ENCODE measurements at regions of chr5 and their contacts with region 1.

Region 1: DNA sequence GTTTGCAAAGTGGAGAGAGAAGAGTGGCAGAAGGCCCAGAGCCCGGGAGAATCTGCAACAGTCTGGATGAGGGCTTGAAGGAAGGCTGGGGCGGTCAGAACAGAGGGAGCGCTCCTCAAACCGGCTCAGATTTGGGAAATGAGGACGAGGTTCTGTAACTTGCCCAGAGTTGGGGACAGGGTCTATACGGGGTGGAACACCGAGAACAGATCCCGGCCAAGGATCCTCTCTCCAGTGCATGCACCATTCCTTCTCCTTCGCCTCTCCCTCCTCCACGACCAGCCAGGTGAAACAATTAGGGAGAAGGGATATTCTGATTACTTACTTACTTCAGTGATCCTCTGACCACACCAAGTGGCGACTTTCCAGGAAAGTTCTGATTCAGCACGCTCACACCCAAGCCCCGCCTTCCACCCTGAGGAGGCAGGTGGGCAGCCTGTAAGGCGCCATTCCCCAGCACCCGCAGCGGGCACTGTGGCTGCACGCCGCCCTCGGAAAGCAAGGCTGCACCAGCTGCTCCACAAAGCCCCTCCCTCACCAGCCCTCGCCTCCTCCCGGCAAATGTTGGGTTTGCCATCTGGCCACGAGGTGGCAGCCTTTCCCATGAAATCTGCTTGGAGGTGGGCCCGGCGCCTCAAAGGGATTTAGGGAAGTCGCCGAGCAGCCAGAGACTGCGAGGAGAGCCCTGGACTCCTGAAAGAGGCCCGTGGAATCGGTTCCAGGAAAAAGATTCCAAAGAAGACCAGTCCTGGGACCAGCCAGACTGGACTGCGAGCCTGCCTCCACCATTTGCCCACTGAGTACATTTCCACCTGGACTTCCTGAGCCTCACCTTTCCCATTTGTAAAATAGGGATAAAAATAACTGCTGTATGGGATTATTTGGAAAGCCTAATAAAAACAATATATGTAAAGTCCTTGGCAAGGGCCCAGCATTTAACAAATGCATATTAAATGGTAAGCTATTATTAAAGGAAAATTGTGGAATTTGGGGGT is 22.2 kb upstream of the WWC1 start:
- DNase-seq: peak; percentile 82
- ATAC-seq: peak; percentile 95
- H3K4me3 ChIP-seq: peak overlapping the region; percentile 38
- H3K27ac ChIP-seq: no peak overlapping the region
- H3K4me1 ChIP-seq: peaks cover 2% of the 10 kb centered on the region; the same call in 1 of the 2 replicates
- H3K27me3 ChIP-seq: no peaks in the 10 kb centered on the region; the same call in 1 of the 2 replicates
- CTCF ChIP-seq: peak; percentile 92
- POLR2A ChIP-seq: 0 out of 2 replicates have a peak, but pooled peaks have one; percentile 45
- RAD21 ChIP-seq: peak; percentile 97

Region 2: DNA sequence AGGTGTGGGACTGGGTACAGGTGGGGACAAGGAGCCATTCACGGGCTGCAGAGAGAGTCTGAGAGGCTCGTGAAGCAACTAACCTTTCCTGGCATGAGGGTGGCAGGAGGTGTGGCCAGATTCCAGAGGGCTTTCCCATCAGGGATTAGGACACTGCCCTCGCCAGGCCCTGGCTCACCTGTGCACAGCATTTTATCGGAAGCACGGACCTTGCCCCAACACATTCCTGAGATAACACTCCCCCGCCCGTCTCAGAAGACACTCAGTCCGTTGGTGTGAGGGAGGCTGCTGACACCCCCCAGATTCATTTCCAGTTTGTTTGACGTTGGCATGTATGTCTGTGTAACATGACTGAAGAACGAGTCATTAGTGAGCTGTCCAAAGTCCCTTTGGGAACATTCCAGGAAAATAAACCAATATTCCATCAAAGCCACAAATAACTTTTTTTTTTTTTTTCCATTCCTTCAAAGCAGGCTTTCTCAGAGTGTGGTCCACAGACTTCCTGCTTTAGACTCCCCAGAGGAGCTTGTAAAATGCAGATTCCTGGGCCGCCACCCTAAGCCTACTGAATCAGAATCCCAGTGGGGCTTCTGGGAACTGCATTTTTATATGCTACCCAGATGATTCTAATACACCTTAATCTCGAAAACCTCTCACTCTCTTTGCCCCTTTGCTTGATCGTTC is 45.6 kb after region 1 on chr5:
- CTCF ChIA-PET with region 1: no interaction called
- POLR2A ChIA-PET with region 1: no interaction called
- dilution Hi-C with region 1: no loop called
- in situ Hi-C with region 1: no loop called
- intact Hi-C with region 1: loop called (anchors 2 kb)
- DNase-seq: peak; percentile 99
- ATAC-seq: peak; percentile 71
- H3K4me3 ChIP-seq: no peak overlapping the region
- H3K27ac ChIP-seq: peak overlapping the region; percentile 75
- H3K4me1 ChIP-seq: peaks cover 29% of the 10 kb centered on the region
- H3K27me3 ChIP-seq: no peaks in the 10 kb centered on the region
- CTCF ChIP-seq: peak; percentile 6; the same call in 1 of the 2 replicates
- POLR2A ChIP-seq: no peak
- RAD21 ChIP-seq: peak; percentile 4; the same call in 1 of the 2 replicates

Region 3: GRCh38 chr5:168434001-168434400 is 164.8 kb after region 1 on chr5:
- CTCF ChIA-PET with region 1: no interaction called
- POLR2A ChIA-PET with region 1: no interaction called
- dilution Hi-C with region 1: no loop called
- in situ Hi-C with region 1: no loop called
- intact Hi-C with region 1: loop called (anchors 5 kb)
- DNase-seq: no peak
- ATAC-seq: no peak
- H3K4me3 ChIP-seq: no peak overlapping the region
- H3K27ac ChIP-seq: no peak overlapping the region
- H3K4me1 ChIP-seq: 0 out of 2 replicates have a peak, but pooled peaks cover 4% of the 10 kb centered on the region
- H3K27me3 ChIP-seq: no peaks in the 10 kb centered on the region
- CTCF ChIP-seq: no peak
- POLR2A ChIP-seq: no peak
- RAD21 ChIP-seq: no peak

Region 4: DNA sequence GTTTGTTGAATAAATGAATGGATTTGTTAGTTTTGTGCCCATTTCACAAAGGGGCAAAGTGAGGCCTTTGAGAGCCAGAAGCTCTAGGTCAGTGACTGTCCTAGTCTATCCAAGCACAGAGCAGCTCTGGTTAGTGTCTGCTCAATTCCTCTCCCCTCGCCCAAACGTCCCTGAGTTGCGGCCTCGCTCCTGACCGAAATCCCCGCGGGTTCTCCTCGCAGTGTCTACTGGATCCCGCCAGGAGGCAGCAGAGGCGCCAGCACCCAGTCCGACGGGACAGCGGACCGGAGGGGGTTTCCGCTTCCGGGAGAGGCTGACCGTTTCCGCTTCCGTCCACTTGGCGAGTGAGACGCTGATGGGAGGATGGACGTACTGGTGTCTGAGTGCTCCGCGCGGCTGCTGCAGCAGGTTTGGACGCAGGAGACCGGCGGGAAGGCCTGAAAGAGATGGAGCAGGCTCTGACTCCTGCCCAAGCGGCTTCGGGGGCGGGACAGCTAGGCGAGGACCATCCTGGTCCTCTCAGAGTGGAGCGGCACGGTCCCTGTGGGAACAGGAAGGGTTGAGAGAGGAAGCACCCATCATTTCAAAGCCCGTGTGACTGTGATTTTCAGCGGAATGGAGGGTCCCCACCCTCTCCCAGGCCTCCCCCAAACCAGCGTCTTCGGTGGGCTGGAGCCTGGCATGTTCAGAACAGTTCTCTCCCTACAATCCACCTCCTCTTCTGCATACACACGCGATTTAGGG is 217.1 kb after region 1 on chr5 and contains the start of gene RARS1:
- CTCF ChIA-PET with region 1: interaction called, 3 read pairs
- POLR2A ChIA-PET with region 1: no interaction called
- dilution Hi-C with region 1: no loop called
- in situ Hi-C with region 1: loop called (anchors 5 kb)
- intact Hi-C with region 1: loop called (anchors 1 kb)
- DNase-seq: peak; percentile 94
- ATAC-seq: peak; percentile 97
- H3K4me3 ChIP-seq: peak within 1 kb of the TSS; percentile 76
- H3K27ac ChIP-seq: peak within 1 kb of the TSS; percentile 87
- H3K4me1 ChIP-seq: no peaks in the 10 kb centered on the region
- H3K27me3 ChIP-seq: no peaks in the 10 kb centered on the region
- CTCF ChIP-seq: peak; percentile 98; the same call in 1 of the 2 replicates
- POLR2A ChIP-seq: peak; percentile 91
- RAD21 ChIP-seq: peak; percentile 58
- total RNA-seq, gene RARS1: 153 and 285 TPM in 2 replicates

Region 5: GRCh38 chr5:168679515-168679920 is 410.3 kb after region 1 on chr5:
- CTCF ChIA-PET with region 1: no interaction called
- POLR2A ChIA-PET with region 1: no interaction called
- dilution Hi-C with region 1: no loop called
- in situ Hi-C with region 1: no loop called
- intact Hi-C with region 1: loop called (anchors 5 kb)
- DNase-seq: peak; percentile 70
- ATAC-seq: peak; percentile 82
- H3K4me3 ChIP-seq: no peak overlapping the region
- H3K27ac ChIP-seq: no peak overlapping the region
- H3K4me1 ChIP-seq: no peaks in the 10 kb centered on the region
- H3K27me3 ChIP-seq: no peaks in the 10 kb centered on the region; the same call in 1 of the 2 replicates
- CTCF ChIP-seq: peak; percentile 83
- POLR2A ChIP-seq: no peak
- RAD21 ChIP-seq: peak; percentile 84

Region 6: GRCh38 chr5:168987543-168988300 is 718.5 kb after region 1 on chr5:
- CTCF ChIA-PET with region 1: no interaction called
- POLR2A ChIA-PET with region 1: no interaction called
- dilution Hi-C with region 1: no loop called
- in situ Hi-C with region 1: no loop called
- intact Hi-C with region 1: loop called (anchors 5 kb)
- DNase-seq: peak; percentile 58
- ATAC-seq: peak; percentile 83
- H3K4me3 ChIP-seq: no peak overlapping the region
- H3K27ac ChIP-seq: no peak overlapping the region
- H3K4me1 ChIP-seq: no peaks in the 10 kb centered on the region
- H3K27me3 ChIP-seq: peaks cover 3% of the 10 kb centered on the region
- CTCF ChIP-seq: peak; percentile 82
- POLR2A ChIP-seq: no peak
- RAD21 ChIP-seq: peak; percentile 82

Region 7: DNA sequence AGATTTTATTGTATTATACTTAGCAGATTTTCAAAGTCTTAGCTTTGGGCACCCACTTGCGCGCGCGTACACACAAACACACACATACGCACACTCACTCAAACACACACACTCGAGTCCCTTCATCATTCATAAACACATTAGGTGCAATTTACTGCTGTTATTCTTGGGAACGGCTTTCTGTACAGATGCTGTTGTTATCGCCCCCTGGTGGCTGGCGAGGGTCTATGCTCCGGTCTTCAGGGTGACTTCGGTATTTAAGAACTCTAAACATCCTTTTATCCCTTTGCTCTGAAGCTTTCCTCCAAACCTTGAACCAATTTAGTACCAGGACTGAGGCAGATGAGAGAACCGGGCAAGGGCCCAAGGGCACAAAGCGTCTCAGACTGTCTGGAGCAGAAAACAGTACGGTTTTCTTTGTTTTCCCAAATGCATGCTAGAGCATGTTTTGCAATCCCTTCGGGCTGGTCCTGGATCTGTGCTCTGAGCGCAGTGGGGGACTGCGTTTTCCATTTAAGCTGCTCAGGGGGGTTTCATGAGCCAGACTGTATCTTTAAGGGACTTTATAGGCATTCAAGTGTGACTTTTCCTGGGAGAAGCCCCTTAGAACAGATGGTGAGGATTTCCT is 1033.4 kb after region 1 on chr5:
- CTCF ChIA-PET with region 1: no interaction called
- POLR2A ChIA-PET with region 1: no interaction called
- dilution Hi-C with region 1: no loop called
- in situ Hi-C with region 1: loop called (anchors 25 kb)
- intact Hi-C with region 1: loop called (anchors 5 kb)
- DNase-seq: peak; percentile 73
- ATAC-seq: peak; percentile 76
- H3K4me3 ChIP-seq: no peak overlapping the region
- H3K27ac ChIP-seq: no peak overlapping the region
- H3K4me1 ChIP-seq: no peaks in the 10 kb centered on the region
- H3K27me3 ChIP-seq: peaks cover 30% of the 10 kb centered on the region
- CTCF ChIP-seq: peak; percentile 80
- POLR2A ChIP-seq: no peak
- RAD21 ChIP-seq: peak; percentile 63

Measured in IMR-90 (cell line).